ENCODE measurements at regions of chr2 and their contacts with region 1.

Region 1: DNA sequence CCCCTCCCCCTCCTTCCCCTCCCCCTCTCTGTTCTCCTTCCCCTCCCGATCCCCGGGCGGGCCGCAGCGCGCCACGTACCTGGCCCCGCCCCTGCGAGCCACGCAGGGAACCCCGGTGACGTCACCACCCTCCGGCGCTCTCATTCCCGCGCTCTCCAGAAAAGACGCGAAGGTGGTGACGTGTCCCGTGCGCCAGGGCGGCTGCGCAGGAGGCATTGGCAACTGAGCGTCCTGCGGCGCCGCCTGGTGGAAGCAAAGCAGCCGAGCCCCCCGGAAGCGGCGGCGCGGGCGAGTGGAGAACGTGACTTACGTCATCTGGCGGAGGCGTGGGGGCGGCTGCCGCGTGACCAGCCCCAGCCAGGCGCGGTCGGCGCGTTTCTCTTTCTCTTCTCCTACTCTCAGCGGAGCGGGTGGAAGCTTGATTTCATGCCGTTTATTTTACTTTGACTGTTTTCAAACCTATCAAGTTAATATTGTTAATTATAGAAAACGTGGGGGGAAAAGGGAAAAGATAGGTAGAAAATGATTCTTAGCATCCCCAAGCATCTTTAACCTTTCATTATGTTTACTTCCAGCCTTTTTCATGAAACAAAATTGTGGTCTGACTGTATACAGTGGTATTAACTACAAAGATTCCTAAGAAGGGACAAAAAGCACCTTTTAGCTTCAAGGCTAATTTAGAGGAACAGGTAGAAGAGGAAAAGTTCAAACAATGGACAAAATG is 48.1 kb downstream of the C2orf42 start:
- DNase-seq: peak; percentile 98
- H3K27ac ChIP-seq: peak overlapping the region; percentile 96
- CTCF ChIP-seq: peak; percentile 95

Region 2: GRCh38 chr2:69914170-69914960 is 228.4 kb before region 1 on chr2:
- CTCF ChIA-PET with region 1: interaction called, 4 read pairs
- POLR2A ChIA-PET with region 1: interaction called, 18 read pairs
- DNase-seq: peak; percentile 99
- H3K27ac ChIP-seq: peak overlapping the region; percentile 86
- CTCF ChIP-seq: no peak

Region 3: GRCh38 chr2:70062268-70062667 is 80.5 kb before region 1 on chr2:
- CTCF ChIA-PET with region 1: no interaction called
- POLR2A ChIA-PET with region 1: no interaction called
- DNase-seq: no peak
- H3K27ac ChIP-seq: no peak overlapping the region
- CTCF ChIP-seq: no peak

Measured in RWPE1 (cell line).